CD8-positive, alpha-beta memory T cell (primary cell): ENCODE measurements at regions of chr17 and their contacts with region 1.

Region 1: DNA sequence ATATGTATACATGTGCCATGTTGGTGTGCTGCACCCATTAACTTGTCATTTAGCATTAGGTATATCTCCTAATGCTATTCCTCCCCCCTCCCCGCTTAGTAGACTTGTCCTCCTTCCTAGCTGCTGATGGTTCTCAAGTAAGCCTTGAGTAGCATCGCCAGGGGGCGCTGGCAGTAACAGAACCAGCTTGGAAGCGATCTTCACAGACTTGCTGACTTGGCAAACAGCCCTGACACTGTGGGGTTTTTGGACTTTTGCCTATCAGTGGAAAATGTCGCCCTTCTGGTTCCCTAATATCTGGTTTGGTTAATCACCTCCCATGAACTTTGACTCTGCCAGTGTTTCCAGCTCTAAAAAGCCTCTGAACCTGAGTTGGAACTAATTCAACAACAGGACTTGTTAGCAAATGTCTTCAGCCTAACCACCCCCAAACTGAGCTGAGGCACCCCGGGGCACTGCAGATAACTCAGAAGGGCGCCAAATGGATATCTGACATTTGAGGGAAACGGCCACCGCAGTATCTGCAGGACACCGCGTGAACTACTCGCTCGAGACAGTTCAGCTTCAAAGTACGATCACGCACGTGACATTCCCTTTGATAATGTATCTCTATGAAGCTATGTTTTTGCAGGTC is 15.4 kb upstream of the SPATA32 start:
- DNase-seq: peak; percentile 76 to 92 (median 83)
- H3K4me3 ChIP-seq: no peak overlapping the region
- H3K4me3 Mint-ChIP-seq: no peak overlapping the region
- H3K27ac ChIP-seq: no peak overlapping the region
- H3K27ac Mint-ChIP-seq: peak overlapping the region in 6 of 8 donors; percentile 0 to 72 (median 38)
- H3K4me1 ChIP-seq: no peaks in the 10 kb centered on the region
- H3K4me1 Mint-ChIP-seq: peaks cover 4 to 16% (median 11%) of the 10 kb centered on the region in 3 donors
- H3K27me3 ChIP-seq: no peaks in the 10 kb centered on the region
- H3K27me3 Mint-ChIP-seq: no peaks in the 10 kb centered on the region

Region 2: GRCh38 chr17:45197555-45198334 is 79.6 kb before region 1 on chr17:
- CTCF ChIA-PET with region 1: no interaction called
- POLR2A ChIA-PET with region 1: no interaction called
- DNase-seq: peak; percentile 74 to 86 (median 83)
- H3K4me3 ChIP-seq: no peak overlapping the region
- H3K4me3 Mint-ChIP-seq: no peak overlapping the region
- H3K27ac ChIP-seq: no peak overlapping the region
- H3K27ac Mint-ChIP-seq: no peak overlapping the region
- H3K4me1 ChIP-seq: no peaks in the 10 kb centered on the region
- H3K4me1 Mint-ChIP-seq: peaks cover 1 to 5% (median 4%) of the 10 kb centered on the region in 3 donors
- H3K27me3 ChIP-seq: no peaks in the 10 kb centered on the region
- H3K27me3 Mint-ChIP-seq: no peaks in the 10 kb centered on the region

Region 3: GRCh38 chr17:45228763-45229539 is 48.4 kb before region 1 on chr17:
- CTCF ChIA-PET with region 1: interaction called, 19 read pairs
- POLR2A ChIA-PET with region 1: no interaction called
- DNase-seq: peak; percentile 78 to 91 (median 85)
- H3K4me3 ChIP-seq: peak overlapping the region; percentile 95
- H3K4me3 Mint-ChIP-seq: peak overlapping the region; percentile 96 to 100 (median 99)
- H3K27ac ChIP-seq: peak overlapping the region; percentile 98
- H3K27ac Mint-ChIP-seq: peak overlapping the region; percentile 97 to 100 (median 100)
- H3K4me1 ChIP-seq: peaks cover 75% of the 10 kb centered on the region
- H3K4me1 Mint-ChIP-seq: peaks cover 80 to 90% (median 83%) of the 10 kb centered on the region in 3 donors
- H3K27me3 ChIP-seq: no peaks in the 10 kb centered on the region
- H3K27me3 Mint-ChIP-seq: peaks cover 0 to 3% of the 10 kb centered on the region in 2 donors

Region 4: DNA sequence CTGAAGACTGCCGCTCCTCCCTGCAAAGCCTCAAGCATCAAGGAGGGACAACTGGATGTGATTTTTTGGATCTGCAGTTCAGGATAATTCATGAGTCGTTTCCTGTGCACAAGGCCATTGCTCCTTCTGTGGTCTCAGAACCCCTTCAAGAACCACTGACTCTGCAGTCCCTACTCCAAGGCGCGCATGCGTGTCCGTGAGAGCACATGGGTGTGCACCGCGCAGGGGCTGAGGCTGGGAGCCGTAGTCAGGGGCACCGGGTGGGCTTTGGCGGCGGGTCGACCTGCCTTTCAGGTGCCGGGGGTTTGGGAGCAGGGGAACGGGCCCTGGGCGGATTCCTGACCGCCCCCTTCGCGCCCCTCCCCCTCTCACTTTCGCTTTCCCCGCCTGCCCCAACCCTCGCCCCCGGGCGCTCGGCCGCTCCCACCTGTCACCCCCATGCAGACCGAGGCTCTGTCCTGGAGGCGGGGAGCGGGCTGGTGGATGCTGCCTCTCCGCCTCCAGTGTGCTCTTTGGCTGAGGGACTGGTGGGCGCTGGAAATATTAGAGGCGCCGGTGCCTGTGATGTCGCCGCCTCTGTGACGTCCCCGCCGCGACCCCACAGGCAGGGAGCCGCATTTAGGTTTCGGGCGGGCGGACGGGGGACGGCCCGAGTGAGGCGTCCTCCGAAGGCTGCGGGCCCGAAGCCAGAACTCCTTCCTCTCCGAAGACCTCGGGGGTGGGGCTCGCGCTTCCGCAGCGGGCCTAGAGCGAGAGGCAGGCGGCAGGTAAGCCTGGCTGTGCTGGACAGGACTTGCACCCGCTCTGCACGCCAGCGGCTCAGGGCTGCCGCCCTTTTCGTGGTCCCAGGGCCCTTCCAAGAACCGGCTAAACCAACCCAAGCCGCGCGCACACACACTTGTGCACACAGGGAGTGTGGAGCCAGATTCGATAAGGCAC is 15.5 kb before region 1 on chr17 and contains the start of gene SPATA32:
- CTCF ChIA-PET with region 1: interaction called, 12 read pairs
- POLR2A ChIA-PET with region 1: no interaction called
- DNase-seq: peak; percentile 52 to 82 (median 67)
- H3K4me3 ChIP-seq: peak within 1 kb of the TSS; percentile 56
- H3K4me3 Mint-ChIP-seq: peak within 1 kb of the TSS; percentile 78 to 93 (median 84)
- H3K27ac ChIP-seq: peak within 1 kb of the TSS; percentile 12
- H3K27ac Mint-ChIP-seq: peak within 1 kb of the TSS; percentile 75 to 91 (median 78)
- H3K4me1 ChIP-seq: peaks cover 26% of the 10 kb centered on the region
- H3K4me1 Mint-ChIP-seq: peaks cover 11 to 28% (median 21%) of the 10 kb centered on the region in 3 donors
- H3K27me3 ChIP-seq: no peaks in the 10 kb centered on the region
- H3K27me3 Mint-ChIP-seq: no peaks in the 10 kb centered on the region
- total RNA-seq, gene SPATA32: 0.15 TPM in 1 of 2 experiments, not detected in the other

Region 5: DNA sequence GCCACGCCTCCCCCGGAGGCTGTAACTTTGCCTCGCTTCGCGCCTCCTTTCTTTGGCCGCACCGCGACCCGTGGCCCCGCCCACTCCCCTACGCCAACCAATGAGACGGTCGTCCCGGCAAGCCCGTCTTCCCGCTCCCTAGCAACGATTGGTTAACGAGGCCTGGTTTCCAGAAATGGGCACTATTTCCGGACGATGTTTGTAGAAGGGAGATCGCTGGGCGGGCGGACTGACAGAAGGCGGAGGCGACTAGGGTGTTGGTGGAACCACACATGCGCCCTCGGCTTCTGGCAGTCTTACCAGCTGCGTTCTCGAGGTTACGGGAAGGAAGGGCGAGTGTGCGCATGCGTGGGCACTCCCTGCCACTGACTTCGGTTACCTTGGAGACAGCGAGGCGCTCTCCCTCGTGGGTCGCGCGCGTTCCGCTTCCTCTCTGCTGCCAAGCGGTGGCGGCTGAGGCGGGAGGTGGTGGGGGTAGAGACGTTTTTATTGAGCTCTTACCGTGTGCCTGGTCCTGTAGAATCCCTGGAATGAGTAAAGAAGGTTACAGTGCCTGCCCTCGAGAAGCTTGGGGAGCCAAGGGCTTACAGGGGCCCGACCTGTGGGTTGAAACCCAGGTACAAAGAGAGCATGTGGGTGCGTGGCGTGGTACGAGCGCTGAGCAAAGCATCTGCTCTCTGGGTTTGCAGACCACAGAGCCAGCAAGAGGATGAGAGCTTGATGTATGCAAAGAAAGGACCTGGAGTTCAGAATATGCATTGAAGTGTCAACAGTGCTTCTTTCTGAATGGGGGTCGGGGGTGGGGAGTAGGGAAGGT is 40.0 kb after region 1 on chr17:
- CTCF ChIA-PET with region 1: interaction called, 47 read pairs
- POLR2A ChIA-PET with region 1: interaction called, 8 read pairs
- DNase-seq: peak; percentile 99 to 100 (median 100)
- H3K4me3 ChIP-seq: peak overlapping the region; percentile 81
- H3K4me3 Mint-ChIP-seq: peak overlapping the region; percentile 83 to 96 (median 90)
- H3K27ac ChIP-seq: peak overlapping the region; percentile 66
- H3K27ac Mint-ChIP-seq: peak overlapping the region; percentile 83 to 98 (median 94)
- H3K4me1 ChIP-seq: peaks cover 86% of the 10 kb centered on the region
- H3K4me1 Mint-ChIP-seq: peaks cover 75 to 89% (median 82%) of the 10 kb centered on the region in 3 donors
- H3K27me3 ChIP-seq: no peaks in the 10 kb centered on the region
- H3K27me3 Mint-ChIP-seq: peaks cover 0 to 3% of the 10 kb centered on the region in 2 donors

Region 6: GRCh38 chr17:45385331-45385997 is 108.1 kb after region 1 on chr17:
- CTCF ChIA-PET with region 1: interaction called, 102 read pairs
- POLR2A ChIA-PET with region 1: interaction called, 5 read pairs
- DNase-seq: peak; percentile 77 to 91 (median 83)
- H3K4me3 ChIP-seq: no peak overlapping the region
- H3K4me3 Mint-ChIP-seq: no peak overlapping the region
- H3K27ac ChIP-seq: no peak overlapping the region
- H3K27ac Mint-ChIP-seq: no peak overlapping the region
- H3K4me1 ChIP-seq: peaks cover 6% of the 10 kb centered on the region
- H3K4me1 Mint-ChIP-seq: peaks cover 0 to 3% (median 2%) of the 10 kb centered on the region in 3 donors
- H3K27me3 ChIP-seq: no peaks in the 10 kb centered on the region
- H3K27me3 Mint-ChIP-seq: peaks cover 8 to 17% of the 10 kb centered on the region in 2 donors